ENCODE measurements at regions of chr9 and their contacts with region 1.

Region 1: GRCh38 chr9:10649076-10649475 is 36.3 kb upstream of the PTPRD start:
- DNase-seq: no peak
- ATAC-seq: no peak

Region 2: GRCh38 chr9:10411272-10411671 is 237.8 kb before region 1 on chr9:
- intact Hi-C with region 1: no loop called
- DNase-seq: no peak
- ATAC-seq: no peak

Region 3: GRCh38 chr9:10605388-10605787 is 43.7 kb before region 1 on chr9:
- intact Hi-C with region 1: no loop called
- DNase-seq: no peak
- ATAC-seq: no peak

Region 4: GRCh38 chr9:10721301-10721700 is 72.2 kb after region 1 on chr9:
- intact Hi-C with region 1: loop called (anchors 10 kb)
- DNase-seq: no peak
- ATAC-seq: no peak

Measured in left ventricle myocardium superior (tissue), 1 donor.